ENCODE measurements at regions of chr18 and their contacts with region 1.

Region 1: DNA sequence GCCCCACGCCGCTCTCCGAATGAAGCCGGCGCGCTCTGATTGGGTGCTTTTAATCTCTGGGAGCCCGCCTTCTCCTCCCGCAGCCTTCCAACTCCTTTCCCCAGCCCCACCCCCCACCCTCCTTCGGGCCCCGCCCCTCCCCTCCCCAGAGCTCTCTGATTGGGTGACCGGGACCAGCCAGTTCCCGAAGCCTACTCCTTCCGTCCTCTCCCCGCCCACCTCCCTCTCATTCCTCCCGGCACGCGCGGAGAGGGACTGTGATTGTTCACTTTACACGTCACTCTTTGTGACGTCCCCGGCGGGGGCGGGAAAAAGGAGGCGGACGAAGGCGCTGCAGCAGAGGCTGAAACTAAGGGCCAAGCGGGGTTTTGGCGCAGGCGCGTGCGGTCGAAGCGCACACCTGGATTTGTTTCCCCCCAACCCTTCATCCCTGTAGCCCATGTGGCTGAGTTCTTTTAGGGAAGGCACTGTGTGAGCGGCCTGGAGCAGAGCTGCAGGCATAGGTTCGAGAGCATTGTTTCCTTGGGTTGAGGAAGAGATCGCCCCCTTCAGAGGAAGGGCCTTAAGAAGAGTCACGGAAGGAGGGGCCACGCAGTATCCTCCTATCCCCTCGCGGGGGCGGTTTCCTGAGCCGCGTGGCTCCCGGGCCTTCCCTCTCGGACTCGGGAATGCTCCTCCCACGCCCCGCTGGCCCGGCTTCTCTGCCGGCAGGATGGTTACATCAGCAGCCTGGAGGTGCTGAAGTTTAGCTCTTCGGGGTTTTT is at the start of gene MEX3C:
- DNase-seq: peak; percentile 100
- H3K4me3 Mint-ChIP-seq: peak within 1 kb of the TSS; percentile 88
- H3K27ac Mint-ChIP-seq: peak within 1 kb of the TSS; percentile 98
- H3K4me1 Mint-ChIP-seq: peaks cover 19% of the 10 kb centered on the region
- H3K27me3 Mint-ChIP-seq: no peaks in the 10 kb centered on the region
- total RNA-seq, gene MEX3C: 50.9 to 52.4 TPM

Region 2: DNA sequence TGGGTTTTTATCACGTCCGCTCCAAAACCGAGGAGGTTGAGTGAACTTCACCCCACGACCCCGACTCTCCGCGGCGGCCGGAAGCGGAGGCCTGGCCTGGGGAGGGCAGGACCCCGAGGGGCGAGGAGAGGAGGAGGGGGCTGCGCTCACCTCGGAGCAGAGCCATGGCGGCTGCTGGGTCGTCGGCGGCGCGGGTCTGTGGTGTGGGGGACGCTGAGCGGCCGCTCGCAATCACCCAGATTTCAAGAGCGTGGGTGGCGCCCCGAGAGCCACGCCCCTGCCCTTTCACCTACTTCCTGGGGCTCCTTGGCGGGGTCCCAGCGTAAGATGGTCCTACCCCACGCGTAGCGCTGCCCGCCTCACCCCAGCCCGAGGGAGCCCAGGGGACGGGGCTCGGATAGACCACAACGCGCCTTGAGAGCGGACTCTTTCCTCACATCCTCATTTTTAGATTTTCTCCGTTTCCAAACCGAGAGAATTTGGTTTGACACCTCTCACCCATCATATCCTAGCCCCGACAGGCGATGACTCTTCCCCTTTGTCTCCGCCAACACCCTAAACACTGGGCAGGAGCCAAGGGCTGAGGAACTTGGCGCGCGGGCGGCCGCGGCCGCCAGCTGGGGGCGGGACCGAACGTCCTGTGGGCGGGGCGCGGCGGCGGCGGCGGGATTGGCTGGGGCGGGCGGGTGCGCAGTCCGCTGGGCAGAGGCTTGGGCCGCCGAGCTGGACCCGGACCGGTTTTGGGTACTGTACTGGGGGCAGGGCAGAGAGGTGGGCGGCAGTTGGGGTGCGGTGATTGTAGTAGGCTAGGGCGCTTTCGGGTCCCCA is 1384.3 kb before region 1 on chr18 and contains the start of gene ACAA2:
- CTCF ChIA-PET with region 1: no interaction called
- intact Hi-C with region 1: loop called (anchors 5 kb)
- DNase-seq: peak; percentile 80
- H3K4me3 Mint-ChIP-seq: peak within 1 kb of the TSS; percentile 90
- H3K27ac Mint-ChIP-seq: peak within 1 kb of the TSS; percentile 96
- H3K4me1 Mint-ChIP-seq: peaks cover 36% of the 10 kb centered on the region
- H3K27me3 Mint-ChIP-seq: no peaks in the 10 kb centered on the region
- total RNA-seq, gene ACAA2: 67.9 to 69.8 TPM

Region 3: GRCh38 chr18:50374753-50375391 is 823.0 kb before region 1 on chr18 and contains the start of gene SKA1:
- CTCF ChIA-PET with region 1: no interaction called
- intact Hi-C with region 1: loop called (anchors 10 kb)
- DNase-seq: peak; percentile 95
- H3K4me3 Mint-ChIP-seq: peak within 1 kb of the TSS; percentile 88
- H3K27ac Mint-ChIP-seq: peak within 1 kb of the TSS; percentile 87
- H3K4me1 Mint-ChIP-seq: peaks cover 2% of the 10 kb centered on the region
- H3K27me3 Mint-ChIP-seq: peaks cover 5% of the 10 kb centered on the region
- total RNA-seq, gene SKA1: 36.1 to 36.3 TPM

Region 4: GRCh38 chr18:50967714-50968661 is 229.9 kb before region 1 on chr18 and contains the start of gene ELAC1:
- CTCF ChIA-PET with region 1: no interaction called
- intact Hi-C with region 1: loop called (anchors 5 kb)
- DNase-seq: peak; percentile 63
- H3K4me3 Mint-ChIP-seq: peak within 1 kb of the TSS; percentile 94
- H3K27ac Mint-ChIP-seq: peak within 1 kb of the TSS; percentile 91
- H3K4me1 Mint-ChIP-seq: peaks cover 23% of the 10 kb centered on the region
- H3K27me3 Mint-ChIP-seq: no peaks in the 10 kb centered on the region
- total RNA-seq, gene ELAC1: 2.7 to 4.0 TPM

Region 5: DNA sequence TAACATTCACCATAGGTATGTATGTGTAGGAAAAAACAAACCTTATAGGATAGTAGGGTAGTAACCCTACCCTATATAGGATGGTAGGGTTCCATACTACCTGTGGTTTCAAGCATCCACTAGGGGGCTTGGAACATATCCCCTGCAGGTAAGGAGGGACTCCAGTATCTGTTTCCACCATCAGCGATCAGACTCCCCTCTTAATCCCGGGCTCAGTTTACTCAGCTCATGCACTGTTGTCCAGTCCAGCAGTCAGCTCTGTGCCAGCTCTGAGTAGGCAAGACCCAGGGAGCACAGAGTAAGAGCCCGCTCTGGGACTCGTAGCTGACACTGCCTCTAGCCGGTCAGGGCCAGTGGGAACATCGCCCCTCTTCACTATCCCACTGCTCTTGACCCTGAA is 62.0 kb before region 1 on chr18:
- CTCF ChIA-PET with region 1: interaction called, 6 read pairs
- intact Hi-C with region 1: loop called (anchors 5 kb)
- DNase-seq: no peak
- H3K4me3 Mint-ChIP-seq: no peak overlapping the region
- H3K27ac Mint-ChIP-seq: no peak overlapping the region
- H3K4me1 Mint-ChIP-seq: no peaks in the 10 kb centered on the region
- H3K27me3 Mint-ChIP-seq: no peaks in the 10 kb centered on the region

Region 6: DNA sequence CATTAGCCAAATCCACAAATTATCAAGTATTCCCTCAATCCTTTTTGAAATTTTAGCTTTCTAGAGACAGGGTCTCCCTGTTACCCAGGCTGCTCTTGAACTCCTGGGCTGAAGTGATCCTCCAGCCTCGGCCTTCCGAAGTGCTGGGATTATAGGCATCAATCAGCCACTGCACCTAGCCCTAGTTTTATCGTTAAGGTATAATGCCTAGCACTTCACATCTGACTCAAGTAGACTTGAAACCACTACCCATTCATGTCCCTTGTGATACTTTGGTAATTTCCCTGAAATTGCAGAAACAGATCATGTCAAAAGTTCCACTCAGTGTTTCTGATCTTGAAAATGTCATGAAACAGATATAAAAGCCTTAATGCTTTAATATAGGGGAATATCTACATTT is 26.6 kb before region 1 on chr18:
- CTCF ChIA-PET with region 1: interaction called, 3 read pairs
- intact Hi-C with region 1: loop called (anchors 1 kb)
- DNase-seq: no peak
- H3K4me3 Mint-ChIP-seq: peak overlapping the region; percentile 52
- H3K27ac Mint-ChIP-seq: peak overlapping the region; percentile 97
- H3K4me1 Mint-ChIP-seq: peaks cover 67% of the 10 kb centered on the region
- H3K27me3 Mint-ChIP-seq: no peaks in the 10 kb centered on the region

Region 7: DNA sequence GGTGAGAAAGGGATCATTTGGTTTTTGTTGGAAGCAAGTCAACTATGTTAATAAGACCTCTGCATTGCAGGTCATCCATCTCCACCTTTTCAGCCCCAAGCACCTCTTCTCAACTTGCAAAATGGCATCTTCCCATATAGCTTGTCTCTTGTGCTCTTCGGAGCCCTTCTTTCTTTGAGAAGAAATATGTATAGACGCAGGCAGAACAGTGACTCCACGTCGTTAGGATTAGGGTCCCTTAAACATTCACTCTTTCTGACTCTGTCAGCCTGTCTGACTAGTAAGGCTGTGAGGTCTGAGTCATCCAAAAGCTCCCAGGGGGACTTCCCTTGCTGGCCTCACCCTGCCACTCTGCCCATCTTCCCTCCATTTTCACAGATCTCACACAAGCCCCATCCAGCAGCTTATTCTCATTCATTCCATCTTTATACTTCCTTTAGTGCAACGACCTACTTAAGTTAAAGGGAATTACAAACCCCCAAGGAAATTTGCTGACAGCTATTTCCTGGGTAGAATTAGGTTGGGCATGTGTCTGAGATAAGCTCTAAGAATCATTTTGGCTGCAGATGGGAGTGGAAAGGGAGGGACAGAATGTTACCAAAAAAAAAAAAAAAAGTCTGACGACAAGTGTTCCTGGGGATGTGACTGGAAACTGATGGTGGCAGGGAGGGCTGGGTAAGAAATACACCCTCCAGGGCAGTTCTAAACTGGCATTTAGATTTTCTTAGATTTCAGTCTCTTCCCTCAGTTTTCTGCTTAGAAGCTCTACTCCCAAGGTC is 37.4 kb after region 1 on chr18:
- CTCF ChIA-PET with region 1: interaction called, 3 read pairs
- intact Hi-C with region 1: loop called (anchors 1 kb)
- DNase-seq: peak; percentile 74
- H3K4me3 Mint-ChIP-seq: no peak overlapping the region
- H3K27ac Mint-ChIP-seq: peak overlapping the region; percentile 68
- H3K4me1 Mint-ChIP-seq: peaks cover 20% of the 10 kb centered on the region
- H3K27me3 Mint-ChIP-seq: peaks cover 7% of the 10 kb centered on the region